Cardiac septum (tissue), 1 donor: ENCODE measurements at regions of chr18 and their contacts with region 1.

Region 1: DNA sequence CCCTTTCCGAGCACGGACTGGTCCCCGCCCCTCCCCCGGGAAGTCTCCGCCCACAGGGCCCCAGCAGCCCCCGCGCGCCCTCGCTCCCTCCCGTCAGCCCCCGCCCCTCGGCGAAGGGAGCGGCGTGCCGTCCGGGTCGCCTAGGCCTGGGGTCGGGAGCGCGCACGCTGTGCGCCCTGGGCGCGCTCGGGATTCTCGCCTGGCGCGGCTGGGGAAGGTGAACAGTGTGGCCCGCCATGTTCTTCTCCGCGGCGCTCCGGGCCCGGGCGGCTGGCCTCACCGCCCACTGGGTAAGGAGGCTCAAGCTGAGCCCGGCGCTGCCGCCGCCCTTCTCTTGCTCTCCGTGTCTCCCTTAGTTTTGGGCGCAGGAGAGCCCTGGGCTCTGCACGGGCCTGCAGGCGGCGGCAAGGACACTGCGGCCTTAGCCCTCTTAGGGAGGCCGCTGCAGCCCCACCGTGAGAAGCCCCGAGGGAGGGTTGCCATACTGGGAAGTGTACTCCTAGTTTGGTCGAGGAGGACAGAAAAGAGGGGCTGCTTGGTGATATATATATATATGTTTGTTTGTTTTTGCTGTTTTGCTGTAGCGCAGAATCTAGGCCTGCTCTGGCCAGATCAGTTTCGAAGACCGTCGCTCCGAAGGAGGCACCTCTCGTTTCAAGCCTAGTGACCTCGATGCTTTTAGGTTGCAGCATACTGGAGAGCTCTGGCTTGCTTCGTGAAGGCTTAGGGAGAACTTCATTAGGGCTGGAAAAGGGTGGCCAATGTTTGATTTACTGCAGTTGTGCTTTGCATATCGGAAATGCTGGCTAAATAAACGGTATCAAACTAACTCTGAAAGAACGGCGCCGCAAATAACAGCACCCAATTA is at the start of gene NDUFV2:
- DNase-seq: peak; percentile 99
- total RNA-seq, gene NDUFV2: 325 TPM

Region 2: DNA sequence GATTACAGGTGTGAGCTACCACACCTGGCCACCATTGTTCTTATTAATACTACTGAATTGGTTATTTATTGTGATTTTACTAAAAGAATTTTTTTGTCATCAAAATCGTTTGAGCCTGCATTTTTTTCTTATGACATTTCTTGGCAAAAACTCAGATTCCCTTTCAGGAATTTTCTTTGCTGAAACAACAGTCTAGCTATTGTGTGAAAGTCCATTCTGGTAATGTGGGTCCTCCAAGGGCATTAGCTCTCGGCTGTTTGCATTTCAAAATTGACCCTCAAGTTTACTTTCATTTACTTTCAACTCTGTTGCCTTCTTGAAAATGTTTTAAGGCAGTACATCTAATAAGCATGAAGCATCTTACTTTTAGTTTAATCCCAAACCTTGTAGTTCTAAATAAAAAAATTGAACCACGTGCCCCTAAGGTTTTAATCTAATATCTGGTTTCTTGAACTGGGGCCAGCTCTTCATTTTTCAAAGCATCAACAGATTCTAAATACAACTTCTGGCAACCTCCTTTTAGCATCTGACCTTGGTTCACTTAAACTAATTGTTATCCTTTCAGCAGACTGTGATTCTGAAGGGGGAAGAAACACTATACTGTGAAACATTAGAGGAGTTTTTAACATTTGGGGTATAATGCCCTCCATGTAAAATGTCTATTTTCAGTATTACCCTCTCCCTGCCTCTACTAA is 818.7 kb before region 1 on chr18:
- intact Hi-C with region 1: no loop called
- DNase-seq: no peak

Region 3: GRCh38 chr18:9117980-9118841 is 15.5 kb after region 1 on chr18:
- intact Hi-C with region 1: loop called (anchors 2 kb)
- DNase-seq: no peak

Region 4: GRCh38 chr18:9136315-9137155 is 33.8 kb after region 1 on chr18 and contains the start of gene ANKRD12:
- intact Hi-C with region 1: loop called (anchors 1 kb)
- DNase-seq: peak; percentile 99
- total RNA-seq, gene ANKRD12: 66.6 TPM

Region 5: GRCh38 chr18:9334329-9334972 is 231.7 kb after region 1 on chr18 and contains the start of gene TWSG1:
- intact Hi-C with region 1: loop called (anchors 10 kb)
- DNase-seq: peak; percentile 97
- total RNA-seq, gene TWSG1: 19.2 TPM